ENCODE measurements at regions of chr17 and their contacts with region 1.

Region 1: GRCh38 chr17:8118769-8119580 is 661 bp upstream of the ALOXE3 start:
- DNase-seq: peak; percentile 64 to 89
- ATAC-seq: peak; percentile 74 to 76
- H3K4me3 ChIP-seq: peak overlapping the region; percentile 49 to 63 (median 56)
- H3K27ac ChIP-seq: peak overlapping the region; percentile 76 to 87 (median 84)
- H3K4me1 ChIP-seq: peaks cover 41 to 49% of the 10 kb centered on the region in 2 donors
- H3K27me3 ChIP-seq: peaks cover 33 to 43% (median 38%) of the 10 kb centered on the region in 3 donors
- CTCF ChIP-seq: peak; percentile 89 to 94 (median 93)
- POLR2A ChIP-seq: no peak

Region 2: DNA sequence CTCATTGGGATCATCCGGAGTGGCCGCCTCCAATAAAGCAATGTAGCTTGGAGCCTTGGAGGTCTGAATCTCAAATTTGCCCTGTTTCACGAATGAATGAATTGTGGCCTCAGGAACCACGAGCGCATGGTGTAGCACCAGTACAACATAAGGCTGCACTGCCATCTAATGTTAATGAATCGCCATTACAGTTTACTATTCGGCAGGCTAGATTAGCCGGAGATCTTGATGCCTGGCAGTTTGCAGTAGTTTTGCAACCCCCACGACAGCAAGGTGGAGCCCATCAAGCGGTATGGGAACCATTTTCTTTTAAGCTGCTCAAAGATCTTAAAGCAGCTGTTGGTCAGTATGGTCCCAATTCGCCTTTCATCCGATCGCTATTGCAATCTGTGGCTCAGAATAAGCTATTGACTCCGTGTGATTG is 61.3 kb before region 1 on chr17:
- in situ Hi-C with region 1: no loop called
- intact Hi-C with region 1: loop called (anchors 5 kb)
- DNase-seq: peak; percentile 26 to 31
- ATAC-seq: peak; percentile 89 to 91
- H3K4me3 ChIP-seq: no peak overlapping the region
- H3K27ac ChIP-seq: no peak overlapping the region
- H3K4me1 ChIP-seq: peaks cover 5 to 6% of the 10 kb centered on the region in 2 donors
- H3K27me3 ChIP-seq: peaks cover 25 to 43% (median 40%) of the 10 kb centered on the region in 3 donors
- CTCF ChIP-seq: peak; percentile 40 to 80 (median 79)
- POLR2A ChIP-seq: no peak

Region 3: GRCh38 chr17:8156246-8156992 is 37.4 kb after region 1 on chr17:
- in situ Hi-C with region 1: no loop called
- intact Hi-C with region 1: loop called (anchors 1 kb)
- DNase-seq: peak; percentile 100
- ATAC-seq: peak; percentile 53 to 63
- H3K4me3 ChIP-seq: peak overlapping the region; percentile 96 to 97 (median 96)
- H3K27ac ChIP-seq: peak overlapping the region; percentile 99 to 100 (median 100)
- H3K4me1 ChIP-seq: peaks cover 34 to 39% of the 10 kb centered on the region in 2 donors
- H3K27me3 ChIP-seq: no peaks in the 10 kb centered on the region
- CTCF ChIP-seq: peak in 2 of 5 experiments; percentile 11 to 25
- POLR2A ChIP-seq: peak; percentile 100

Region 4: GRCh38 chr17:8189711-8190477 is 70.9 kb after region 1 on chr17 and contains the start of gene BORCS6:
- in situ Hi-C with region 1: loop called in 1 of 4 experiments (anchors 10 kb)
- intact Hi-C with region 1: loop called (anchors 1 kb)
- DNase-seq: peak; percentile 99
- ATAC-seq: peak; percentile 68 to 69
- H3K4me3 ChIP-seq: peak within 1 kb of the TSS; percentile 59 to 98 (median 84)
- H3K27ac ChIP-seq: peak within 1 kb of the TSS; percentile 86 to 99 (median 97)
- H3K4me1 ChIP-seq: peaks cover 37 to 42% of the 10 kb centered on the region in 2 donors
- H3K27me3 ChIP-seq: no peaks in the 10 kb centered on the region
- CTCF ChIP-seq: peak in 1 of 5 experiments; percentile 19
- POLR2A ChIP-seq: peak; percentile 83 to 91
- total RNA-seq, gene BORCS6: 16.2 to 34.5 (median 26.2) TPM

Region 5: DNA sequence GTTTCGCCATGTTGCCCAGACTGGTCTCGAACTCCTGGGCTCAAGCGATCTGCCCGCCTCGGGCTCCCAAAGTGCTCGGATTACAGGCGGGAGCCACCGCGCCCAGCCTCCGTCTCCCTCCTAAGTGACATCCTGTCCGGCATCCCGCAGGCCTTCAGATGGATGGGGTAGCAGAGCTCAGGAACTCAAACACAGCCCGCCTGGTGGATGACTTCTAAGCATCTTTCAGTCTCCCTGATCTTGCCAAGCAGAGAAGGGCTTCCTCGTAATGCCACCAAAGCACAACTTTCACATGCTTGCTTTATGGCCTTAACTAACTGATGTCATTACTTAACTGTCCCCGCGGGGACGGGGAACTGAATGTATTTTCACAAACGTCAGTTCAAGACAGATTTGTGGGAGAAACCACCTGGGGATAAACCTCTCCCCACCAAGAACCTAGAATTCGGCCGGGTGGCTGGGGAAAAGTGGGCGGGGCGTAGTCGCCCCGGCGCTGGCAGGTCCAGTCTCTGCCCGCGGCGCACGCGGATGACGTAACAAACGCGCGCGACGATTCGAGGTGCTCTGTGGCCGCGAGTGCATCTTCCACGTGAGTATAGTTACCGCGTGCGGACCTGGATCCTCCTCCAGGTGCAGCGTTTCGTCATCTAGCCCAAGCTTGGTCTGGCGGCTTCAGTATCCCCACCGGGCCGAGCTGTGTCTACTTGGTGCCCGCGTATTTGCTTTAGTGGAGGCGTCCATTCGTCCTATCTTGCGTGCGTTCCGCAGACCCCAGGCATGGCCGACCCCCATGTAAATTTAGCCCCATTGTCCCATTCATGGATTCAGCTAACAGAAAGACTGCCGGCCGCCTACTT is 130.0 kb after region 1 on chr17 and contains the start of gene PFAS:
- in situ Hi-C with region 1: no loop called
- intact Hi-C with region 1: loop called (anchors 1 kb)
- DNase-seq: peak; percentile 89 to 92
- ATAC-seq: peak; percentile 80 to 81
- H3K4me3 ChIP-seq: peak within 1 kb of the TSS; percentile 82 to 99 (median 92)
- H3K27ac ChIP-seq: peak within 1 kb of the TSS; percentile 96 to 100 (median 98)
- H3K4me1 ChIP-seq: peaks cover 8 to 13% of the 10 kb centered on the region in 2 donors
- H3K27me3 ChIP-seq: no peaks in the 10 kb centered on the region
- CTCF ChIP-seq: peak in 2 of 5 experiments; percentile 11 to 33
- POLR2A ChIP-seq: peak; percentile 37 to 63
- total RNA-seq, gene PFAS: 2.6 to 8.4 (median 6.5) TPM

Measured in gastrocnemius medialis (tissue), 4 donors.